Caco-2 (cell line): ENCODE measurements at regions of chr18 and their contacts with region 1.

Region 1: DNA sequence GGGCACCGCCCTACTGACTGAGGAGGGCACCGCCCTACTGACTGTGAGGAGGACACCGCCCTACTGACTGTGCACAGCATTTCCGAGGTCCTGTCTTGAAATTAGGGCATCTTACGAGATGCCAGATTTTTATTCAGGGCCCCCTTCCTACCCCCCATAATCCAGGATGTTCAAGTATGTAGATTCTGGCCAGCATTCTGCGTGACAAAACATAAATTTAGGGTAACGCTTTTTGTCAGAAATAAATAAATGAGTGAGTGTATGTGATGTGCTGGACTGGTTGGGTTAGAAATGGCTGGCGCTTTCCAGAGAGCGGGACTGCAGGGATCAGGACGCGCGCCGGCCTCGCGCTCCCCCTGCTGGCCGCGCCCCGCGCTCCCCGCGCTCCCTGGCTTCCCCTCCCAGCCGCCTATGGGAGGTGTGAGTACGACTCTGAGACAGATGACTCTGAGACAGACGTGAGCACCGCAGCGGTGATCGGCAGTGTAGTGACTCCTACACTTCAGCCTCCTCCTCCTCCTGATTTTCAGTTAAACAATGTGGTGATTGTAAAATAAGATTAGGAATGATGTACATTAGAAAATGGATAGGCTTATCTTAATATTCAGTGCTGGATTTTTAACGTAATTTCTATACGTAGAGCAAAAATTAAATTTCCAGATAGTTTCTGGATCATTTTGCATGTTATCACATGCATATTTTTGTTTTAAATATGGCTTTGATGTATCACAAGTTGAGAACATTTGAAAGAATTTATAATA is 149.2 kb upstream of the NFATC1 start:
- DNase-seq: peak; percentile 45 to 77
- H3K4me3 ChIP-seq: no peak overlapping the region
- H3K4me3 Mint-ChIP-seq: no peak overlapping the region
- H3K27ac Mint-ChIP-seq: no peak overlapping the region
- H3K4me1 ChIP-seq: no peaks in the 10 kb centered on the region
- H3K4me1 Mint-ChIP-seq: no peaks in the 10 kb centered on the region
- H3K27me3 ChIP-seq: no peaks in the 10 kb centered on the region
- H3K27me3 Mint-ChIP-seq: no peaks in the 10 kb centered on the region
- CTCF ChIP-seq: peak; percentile 38 to 81

Region 2: GRCh38 chr18:78659748-78660147 is 586.8 kb before region 1 on chr18:
- CTCF ChIA-PET with region 1: no interaction called
- POLR2A ChIA-PET with region 1: no interaction called
- intact Hi-C with region 1: no loop called
- DNase-seq: no peak
- H3K4me3 ChIP-seq: no peak overlapping the region
- H3K4me3 Mint-ChIP-seq: no peak overlapping the region
- H3K27ac Mint-ChIP-seq: no peak overlapping the region
- H3K4me1 ChIP-seq: no peaks in the 10 kb centered on the region
- H3K4me1 Mint-ChIP-seq: no peaks in the 10 kb centered on the region
- H3K27me3 ChIP-seq: no peaks in the 10 kb centered on the region
- H3K27me3 Mint-ChIP-seq: no peaks in the 10 kb centered on the region
- CTCF ChIP-seq: peak in 1 of 2 experiments; percentile 13

Region 3: DNA sequence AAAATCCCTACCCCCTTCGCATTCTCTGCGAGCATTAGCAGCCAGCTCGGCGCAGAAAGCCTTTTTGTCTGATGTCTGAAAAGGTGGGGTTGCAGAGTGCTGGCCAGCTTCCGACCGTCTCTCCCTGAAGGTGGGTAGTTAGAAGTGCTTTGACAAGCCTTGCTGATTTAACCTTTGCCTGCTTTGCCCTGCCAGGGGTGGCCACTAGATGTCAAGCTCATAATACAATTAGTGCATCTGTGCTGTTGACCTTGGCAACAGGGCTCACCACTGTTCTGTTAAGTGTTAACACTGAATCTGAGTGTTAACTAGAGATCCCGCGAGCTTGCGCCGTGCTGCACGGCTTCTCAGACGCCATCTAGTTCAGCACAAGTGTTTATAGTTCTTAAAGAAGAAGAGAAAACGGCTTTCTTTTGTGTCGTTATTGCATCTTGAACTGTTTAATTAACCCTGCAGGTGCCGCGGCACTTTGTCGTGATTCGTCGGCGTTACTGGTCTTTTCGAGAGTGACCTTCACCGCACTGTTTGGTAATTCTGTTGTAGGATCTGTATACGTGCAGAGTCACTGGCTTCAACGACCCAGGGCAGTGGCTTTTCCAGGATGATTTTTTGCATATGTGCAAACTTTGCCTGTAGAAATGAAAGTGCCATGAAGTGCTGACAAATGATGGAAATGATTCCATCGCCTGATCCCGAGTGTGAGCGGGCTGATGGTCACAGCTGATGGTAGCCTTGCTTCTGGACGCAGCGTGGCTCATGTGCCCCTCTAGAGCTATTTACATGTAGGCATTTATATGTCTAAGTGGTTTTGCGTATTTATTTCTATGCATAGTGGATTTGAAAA is 261.4 kb before region 1 on chr18:
- CTCF ChIA-PET with region 1: no interaction called
- POLR2A ChIA-PET with region 1: no interaction called
- intact Hi-C with region 1: loop called (anchors 5 kb)
- DNase-seq: peak in 1 of 2 experiments; percentile 3
- H3K4me3 ChIP-seq: no peak overlapping the region
- H3K4me3 Mint-ChIP-seq: no peak overlapping the region
- H3K27ac Mint-ChIP-seq: no peak overlapping the region
- H3K4me1 ChIP-seq: no peaks in the 10 kb centered on the region
- H3K4me1 Mint-ChIP-seq: no peaks in the 10 kb centered on the region
- H3K27me3 ChIP-seq: no peaks in the 10 kb centered on the region
- H3K27me3 Mint-ChIP-seq: no peaks in the 10 kb centered on the region
- CTCF ChIP-seq: no peak

Region 4: DNA sequence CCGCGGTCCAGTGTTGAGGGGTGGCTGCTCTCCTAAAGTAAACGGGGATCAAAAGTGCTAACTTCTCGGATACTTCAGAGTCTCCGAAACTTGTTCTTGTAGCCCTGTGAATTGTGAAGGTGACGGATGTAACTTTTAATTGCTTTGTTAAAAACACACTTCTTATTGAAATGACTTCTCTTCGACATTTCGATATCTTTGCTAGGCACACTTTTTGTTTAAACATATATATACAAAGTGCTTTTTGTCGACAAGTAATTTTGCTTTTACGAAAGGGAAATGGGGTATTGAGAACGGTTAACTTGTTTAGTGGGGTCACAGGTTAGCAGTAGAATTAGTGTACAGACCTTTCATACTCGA is 176.8 kb before region 1 on chr18:
- CTCF ChIA-PET with region 1: no interaction called
- POLR2A ChIA-PET with region 1: no interaction called
- intact Hi-C with region 1: loop called (anchors 5 kb)
- DNase-seq: no peak
- H3K4me3 ChIP-seq: peak overlapping the region; percentile 63
- H3K4me3 Mint-ChIP-seq: peak overlapping the region; percentile 82
- H3K27ac Mint-ChIP-seq: peak overlapping the region; percentile 22
- H3K4me1 ChIP-seq: no peaks in the 10 kb centered on the region
- H3K4me1 Mint-ChIP-seq: peaks cover 11% of the 10 kb centered on the region
- H3K27me3 ChIP-seq: no peaks in the 10 kb centered on the region
- H3K27me3 Mint-ChIP-seq: no peaks in the 10 kb centered on the region
- CTCF ChIP-seq: no peak